CD4-positive, alpha-beta memory T cell (primary cell): ENCODE measurements at regions of chr3 and their contacts with region 1.

Region 1: GRCh38 chr3:187745201-187746058 is at the start of gene BCL6:
- DNase-seq: peak; percentile 92 to 95 (median 94)
- H3K4me3 ChIP-seq: peak within 1 kb of the TSS; percentile 71 to 98
- H3K4me3 Mint-ChIP-seq: peak within 1 kb of the TSS; percentile 95 to 99 (median 96)
- H3K27ac ChIP-seq: peak within 1 kb of the TSS; percentile 82
- H3K27ac Mint-ChIP-seq: peak within 1 kb of the TSS; percentile 99
- H3K4me1 ChIP-seq: peaks cover 53% of the 10 kb centered on the region
- H3K4me1 Mint-ChIP-seq: peaks cover 24 to 74% (median 52%) of the 10 kb centered on the region in 4 donors
- H3K27me3 ChIP-seq: no peaks in the 10 kb centered on the region
- H3K27me3 Mint-ChIP-seq: no peaks in the 10 kb centered on the region
- total RNA-seq, gene BCL6: 31.4 to 34.8 TPM

Region 2: GRCh38 chr3:187041362-187042307 is 703.8 kb before region 1 on chr3:
- CTCF ChIA-PET with region 1: no interaction called
- POLR2A ChIA-PET with region 1: no interaction called
- intact Hi-C with region 1: no loop called
- DNase-seq: peak; percentile 55 to 87 (median 65)
- H3K4me3 ChIP-seq: peak overlapping the region in 1 of 2 donors; percentile 17
- H3K4me3 Mint-ChIP-seq: peak overlapping the region; percentile 60 to 82 (median 72)
- H3K27ac ChIP-seq: peak overlapping the region; percentile 59
- H3K27ac Mint-ChIP-seq: peak overlapping the region; percentile 90 to 97 (median 94)
- H3K4me1 ChIP-seq: peaks cover 87% of the 10 kb centered on the region
- H3K4me1 Mint-ChIP-seq: peaks cover 65 to 85% (median 79%) of the 10 kb centered on the region in 4 donors
- H3K27me3 ChIP-seq: no peaks in the 10 kb centered on the region
- H3K27me3 Mint-ChIP-seq: no peaks in the 10 kb centered on the region

Region 3: GRCh38 chr3:187456250-187456649 is 289.2 kb before region 1 on chr3:
- CTCF ChIA-PET with region 1: no interaction called
- POLR2A ChIA-PET with region 1: no interaction called
- intact Hi-C with region 1: no loop called
- DNase-seq: no peak
- H3K4me3 ChIP-seq: no peak overlapping the region
- H3K4me3 Mint-ChIP-seq: no peak overlapping the region
- H3K27ac ChIP-seq: no peak overlapping the region
- H3K27ac Mint-ChIP-seq: no peak overlapping the region
- H3K4me1 ChIP-seq: no peaks in the 10 kb centered on the region
- H3K4me1 Mint-ChIP-seq: no peaks in the 10 kb centered on the region
- H3K27me3 ChIP-seq: no peaks in the 10 kb centered on the region
- H3K27me3 Mint-ChIP-seq: peaks cover 7 to 14% of the 10 kb centered on the region in 2 donors

Region 4: DNA sequence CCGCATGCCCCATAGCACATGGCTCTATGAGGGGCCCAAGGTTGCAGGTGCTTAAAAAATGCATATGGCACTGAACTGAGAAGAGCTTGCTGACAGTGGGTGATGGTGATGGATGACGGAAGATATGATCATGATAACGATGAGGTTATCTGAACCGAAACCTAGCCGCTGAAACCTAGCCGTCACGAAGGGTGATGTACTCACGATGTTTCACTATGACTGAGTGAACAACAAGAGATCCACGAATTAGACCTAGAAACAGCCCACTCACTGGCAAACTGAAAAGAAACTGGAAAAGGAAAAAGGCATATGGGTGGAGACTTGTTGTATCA is 57.5 kb after region 1 on chr3:
- CTCF ChIA-PET with region 1: interaction called, 16 read pairs
- POLR2A ChIA-PET with region 1: interaction called, 4 read pairs
- intact Hi-C with region 1: loop called (anchors 2 kb)
- DNase-seq: peak; percentile 38 to 63 (median 48)
- H3K4me3 ChIP-seq: peak overlapping the region; percentile 0 to 9
- H3K4me3 Mint-ChIP-seq: peak overlapping the region; percentile 80 to 89 (median 88)
- H3K27ac ChIP-seq: no peak overlapping the region
- H3K27ac Mint-ChIP-seq: peak overlapping the region in 6 of 7 donors; percentile 39 to 95 (median 90)
- H3K4me1 ChIP-seq: peaks cover 49% of the 10 kb centered on the region
- H3K4me1 Mint-ChIP-seq: peaks cover 40 to 80% (median 52%) of the 10 kb centered on the region in 4 donors
- H3K27me3 ChIP-seq: no peaks in the 10 kb centered on the region
- H3K27me3 Mint-ChIP-seq: no peaks in the 10 kb centered on the region

Region 5: DNA sequence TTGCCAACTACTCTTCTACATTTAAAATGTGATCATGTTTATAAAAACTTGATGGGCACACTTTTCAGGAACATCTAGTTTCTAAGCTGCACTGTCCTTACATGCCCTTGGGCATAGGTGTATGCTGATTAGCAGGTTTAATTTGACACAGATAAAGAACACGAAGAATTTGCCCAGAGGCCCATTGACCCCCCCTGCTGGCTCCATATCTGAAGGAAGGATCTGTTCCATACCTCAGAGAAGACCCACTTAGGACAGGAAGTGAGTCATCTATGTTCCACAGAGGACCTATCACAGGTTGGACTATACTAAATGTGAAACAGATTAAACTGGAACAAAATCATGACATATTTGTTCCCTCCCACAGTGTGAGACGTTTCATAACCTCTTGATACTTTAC is 315.7 kb after region 1 on chr3:
- CTCF ChIA-PET with region 1: interaction called, 42 read pairs
- POLR2A ChIA-PET with region 1: interaction called, 8 read pairs
- intact Hi-C with region 1: loop called (anchors 1 kb)
- DNase-seq: peak; percentile 50 to 78 (median 63)
- H3K4me3 ChIP-seq: no peak overlapping the region
- H3K4me3 Mint-ChIP-seq: peak overlapping the region in 2 of 8 donors; percentile 17 to 43
- H3K27ac ChIP-seq: no peak overlapping the region
- H3K27ac Mint-ChIP-seq: peak overlapping the region in 6 of 7 donors; percentile 71 to 95 (median 84)
- H3K4me1 ChIP-seq: peaks cover 12% of the 10 kb centered on the region
- H3K4me1 Mint-ChIP-seq: peaks cover 12 to 19% (median 14%) of the 10 kb centered on the region in 4 donors
- H3K27me3 ChIP-seq: no peaks in the 10 kb centered on the region
- H3K27me3 Mint-ChIP-seq: no peaks in the 10 kb centered on the region

Region 6: DNA sequence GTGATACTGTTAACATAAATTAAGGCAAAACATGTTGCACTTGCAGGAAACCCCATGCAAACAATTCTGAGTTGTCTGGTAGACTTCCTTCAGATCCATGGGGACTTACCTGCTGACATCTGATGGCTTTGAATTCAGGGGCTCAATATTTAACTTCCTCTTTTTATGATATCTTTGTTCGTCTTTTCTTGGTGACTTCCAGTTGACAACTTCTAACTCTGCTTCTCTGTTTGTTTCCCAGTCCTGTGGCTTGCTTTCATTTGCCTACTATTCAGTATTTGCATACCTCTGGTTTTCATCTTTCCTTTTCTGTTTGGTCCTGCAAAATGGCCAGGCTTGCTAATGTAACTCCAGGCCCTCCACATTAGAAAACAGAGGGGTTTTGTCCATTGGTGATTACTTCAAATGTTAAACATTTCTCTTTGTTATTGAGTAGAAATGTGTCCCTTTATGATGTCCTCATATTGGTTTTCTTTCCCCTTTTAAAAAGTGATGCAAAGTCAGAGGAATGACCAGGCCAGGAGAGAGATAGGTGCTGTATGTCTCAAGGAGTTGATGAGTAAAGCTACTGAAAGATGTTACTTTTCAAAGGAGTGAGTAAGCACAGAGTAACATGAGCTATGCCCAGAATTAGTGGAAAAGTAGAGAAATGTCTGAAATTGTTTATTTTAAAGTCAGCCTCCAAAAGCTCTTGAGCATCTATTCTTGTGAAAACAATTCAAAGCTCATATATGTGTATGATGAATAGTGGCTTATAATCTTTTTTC is 744.4 kb after region 1 on chr3:
- CTCF ChIA-PET with region 1: no interaction called
- POLR2A ChIA-PET with region 1: no interaction called
- intact Hi-C with region 1: loop called (anchors 10 kb)
- DNase-seq: no peak
- H3K4me3 ChIP-seq: no peak overlapping the region
- H3K4me3 Mint-ChIP-seq: no peak overlapping the region
- H3K27ac ChIP-seq: no peak overlapping the region
- H3K27ac Mint-ChIP-seq: no peak overlapping the region
- H3K4me1 ChIP-seq: no peaks in the 10 kb centered on the region
- H3K4me1 Mint-ChIP-seq: peaks cover 0 to 2% (median under 1%) of the 10 kb centered on the region in 4 donors
- H3K27me3 ChIP-seq: no peaks in the 10 kb centered on the region
- H3K27me3 Mint-ChIP-seq: no peaks in the 10 kb centered on the region

Region 7: GRCh38 chr3:189123595-189124387 is 1378.4 kb after region 1 on chr3:
- CTCF ChIA-PET with region 1: interaction called, 66 read pairs
- POLR2A ChIA-PET with region 1: interaction called, 29 read pairs
- intact Hi-C with region 1: no loop called
- DNase-seq: no peak
- H3K4me3 ChIP-seq: no peak overlapping the region
- H3K4me3 Mint-ChIP-seq: peak overlapping the region in 6 of 8 donors; percentile 73 to 85 (median 78)
- H3K27ac ChIP-seq: no peak overlapping the region
- H3K27ac Mint-ChIP-seq: peak overlapping the region in 5 of 7 donors; percentile 7 to 93 (median 72)
- H3K4me1 ChIP-seq: peaks cover 45% of the 10 kb centered on the region
- H3K4me1 Mint-ChIP-seq: peaks cover 16 to 66% (median 34%) of the 10 kb centered on the region in 4 donors
- H3K27me3 ChIP-seq: no peaks in the 10 kb centered on the region
- H3K27me3 Mint-ChIP-seq: no peaks in the 10 kb centered on the region